K562 (cell line): ENCODE measurements at regions of chr17 and their contacts with region 1.

Region 1: GRCh38 chr17:27245230-27245696 is 48.7 kb upstream of the WSB1 start:
- DNase-seq: peak; percentile 84 to 90 (median 88)
- ATAC-seq: peak; percentile 100
- H3K4me3 ChIP-seq: no peak overlapping the region
- H3K27ac ChIP-seq: no peak overlapping the region
- H3K4me1 ChIP-seq: peaks cover 7 to 13% of the 10 kb centered on the region in 2 experiments; a peak in 4 of 5 replicates
- H3K27me3 ChIP-seq: no peaks in the 10 kb centered on the region; a peak in 1 of 5 replicates
- CTCF ChIP-seq: peak; percentile 95 to 97 (median 96)
- EP300 ChIP-seq: no peak
- POLR2A ChIP-seq: no peak
- RAD21 ChIP-seq: peak; percentile 98 to 99

Region 2: GRCh38 chr17:27306276-27306835 is 61.1 kb after region 1 on chr17:
- CTCF ChIA-PET with region 1: no interaction called
- POLR2A ChIA-PET with region 1: no interaction called
- in situ Hi-C with region 1: no loop called
- intact Hi-C with region 1: no loop called
- DNase-seq: no peak
- ATAC-seq: no peak
- H3K4me3 ChIP-seq: no peak overlapping the region
- H3K27ac ChIP-seq: no peak overlapping the region
- H3K4me1 ChIP-seq: no peaks in the 10 kb centered on the region
- H3K27me3 ChIP-seq: no peaks in the 10 kb centered on the region
- CTCF ChIP-seq: no peak
- EP300 ChIP-seq: no peak
- POLR2A ChIP-seq: no peak
- RAD21 ChIP-seq: no peak

Region 3: GRCh38 chr17:27323524-27324206 is 78.4 kb after region 1 on chr17:
- CTCF ChIA-PET with region 1: no interaction called
- POLR2A ChIA-PET with region 1: interaction called, 3 read pairs
- in situ Hi-C with region 1: no loop called
- intact Hi-C with region 1: loop called (anchors 5 kb)
- DNase-seq: peak; percentile 46 to 77 (median 56)
- ATAC-seq: peak; percentile 94
- H3K4me3 ChIP-seq: no peak overlapping the region
- H3K27ac ChIP-seq: no peak overlapping the region
- H3K4me1 ChIP-seq: peaks cover 7 to 13% of the 10 kb centered on the region in 2 experiments; a peak in 4 of 5 replicates
- H3K27me3 ChIP-seq: no peaks in the 10 kb centered on the region
- CTCF ChIP-seq: no peak
- EP300 ChIP-seq: 0 out of 2 replicates have a peak, but pooled peaks have one; percentile 5
- POLR2A ChIP-seq: no peak
- RAD21 ChIP-seq: no peak

Region 4: GRCh38 chr17:27332485-27333409 is 87.5 kb after region 1 on chr17:
- CTCF ChIA-PET with region 1: interaction called, 32 read pairs
- POLR2A ChIA-PET with region 1: interaction called, 7 read pairs
- in situ Hi-C with region 1: no loop called
- intact Hi-C with region 1: no loop called
- DNase-seq: peak; percentile 92 to 99 (median 94)
- ATAC-seq: peak; percentile 97
- H3K4me3 ChIP-seq: peak overlapping the region; percentile 39
- H3K27ac ChIP-seq: peak overlapping the region; percentile 88
- H3K4me1 ChIP-seq: peaks cover 22 to 31% of the 10 kb centered on the region in 2 experiments; a peak in 4 of 5 replicates
- H3K27me3 ChIP-seq: no peaks in the 10 kb centered on the region
- CTCF ChIP-seq: peak; percentile 90 to 96 (median 95)
- EP300 ChIP-seq: peak; percentile 28; the same call in 1 of the 2 replicates
- POLR2A ChIP-seq: peak; percentile 72
- RAD21 ChIP-seq: peak; percentile 98 to 99

Region 5: GRCh38 chr17:27353461-27354050 is 108.3 kb after region 1 on chr17:
- CTCF ChIA-PET with region 1: interaction called, 3 read pairs
- POLR2A ChIA-PET with region 1: interaction called, 3 read pairs
- in situ Hi-C with region 1: no loop called
- intact Hi-C with region 1: loop called (anchors 2 kb)
- DNase-seq: peak; percentile 97
- ATAC-seq: peak; percentile 92
- H3K4me3 ChIP-seq: peak overlapping the region; percentile 79
- H3K27ac ChIP-seq: peak overlapping the region; percentile 98
- H3K4me1 ChIP-seq: peaks cover 33 to 35% of the 10 kb centered on the region in 2 experiments
- H3K27me3 ChIP-seq: no peaks in the 10 kb centered on the region
- CTCF ChIP-seq: peak; percentile 82 to 97 (median 93)
- EP300 ChIP-seq: peak; percentile 81
- POLR2A ChIP-seq: peak; percentile 91
- RAD21 ChIP-seq: peak; percentile 97

Region 6: GRCh38 chr17:27381007-27381501 is 135.8 kb after region 1 on chr17:
- CTCF ChIA-PET with region 1: interaction called, 9 read pairs
- POLR2A ChIA-PET with region 1: interaction called, 5 read pairs
- in situ Hi-C with region 1: no loop called
- intact Hi-C with region 1: loop called (anchors 5 kb)
- DNase-seq: peak; percentile 93 to 95 (median 94)
- ATAC-seq: peak; percentile 94
- H3K4me3 ChIP-seq: no peak overlapping the region
- H3K27ac ChIP-seq: peak overlapping the region; percentile 39; the same call in 1 of the 3 replicates
- H3K4me1 ChIP-seq: peaks cover 26 to 30% of the 10 kb centered on the region in 2 experiments
- H3K27me3 ChIP-seq: no peaks in the 10 kb centered on the region
- CTCF ChIP-seq: peak; percentile 100
- EP300 ChIP-seq: peak; percentile 69
- POLR2A ChIP-seq: no peak
- RAD21 ChIP-seq: peak; percentile 92 to 98